ENCODE measurements at regions of chr14 and their contacts with region 1.

Region 1: DNA sequence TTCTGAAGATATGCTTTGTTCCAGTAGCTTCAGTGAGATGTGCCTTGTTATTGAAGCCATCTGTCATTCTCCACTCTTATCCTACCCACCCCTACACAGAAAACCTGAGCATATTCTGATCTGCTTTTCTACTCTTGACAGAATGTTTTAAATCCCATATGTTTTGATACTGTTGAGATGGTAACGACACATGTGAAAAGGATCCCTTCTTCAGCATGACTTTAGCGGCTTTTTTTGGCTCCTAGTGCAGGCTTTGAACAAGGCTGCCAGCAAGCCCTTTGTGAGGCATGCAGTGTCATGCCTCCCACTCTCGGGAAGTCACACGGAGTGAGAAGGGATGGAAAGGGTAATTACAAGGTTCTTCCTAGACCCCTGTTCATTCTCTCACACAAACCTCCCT is 228.8 kb upstream of the RGS6 start:
- DNase-seq: peak; percentile 76
- ATAC-seq: peak; percentile 19
- H3K4me3 ChIP-seq: no peak overlapping the region
- H3K27ac ChIP-seq: no peak overlapping the region
- H3K4me1 ChIP-seq: peaks cover 21% of the 10 kb centered on the region
- H3K27me3 ChIP-seq: no peaks in the 10 kb centered on the region
- CTCF ChIP-seq: no peak
- POLR2A ChIP-seq: no peak
- RAD21 ChIP-seq: no peak

Region 2: DNA sequence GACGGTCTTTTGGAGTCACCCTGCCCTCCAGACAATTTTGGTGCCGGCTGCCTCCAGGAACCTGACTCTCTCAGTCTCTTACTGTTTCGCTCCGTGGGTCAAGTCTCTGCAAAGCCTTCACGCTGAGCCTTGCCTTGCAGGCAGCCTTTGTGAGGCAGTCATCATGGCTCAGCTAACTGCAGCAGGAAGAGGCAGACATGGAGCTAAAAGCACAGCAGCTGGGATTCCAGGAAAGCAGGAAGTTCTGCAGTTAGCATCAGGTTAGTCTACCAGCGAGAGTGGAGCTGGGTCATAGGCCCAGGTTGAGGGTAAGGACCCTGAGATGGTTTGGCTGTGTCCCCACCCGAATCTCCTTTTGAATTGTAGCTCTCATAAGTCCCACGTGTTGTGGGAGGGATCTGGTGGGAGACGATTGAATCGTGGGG is 490.8 kb before region 1 on chr14:
- CTCF ChIA-PET with region 1: no interaction called
- POLR2A ChIA-PET with region 1: no interaction called
- dilution Hi-C with region 1: no loop called
- in situ Hi-C with region 1: no loop called
- intact Hi-C with region 1: no loop called
- DNase-seq: peak; percentile 10
- ATAC-seq: peak; percentile 32; the same call in 1 of the 2 replicates
- H3K4me3 ChIP-seq: no peak overlapping the region
- H3K27ac ChIP-seq: no peak overlapping the region
- H3K4me1 ChIP-seq: no peaks in the 10 kb centered on the region
- H3K27me3 ChIP-seq: no peaks in the 10 kb centered on the region
- CTCF ChIP-seq: no peak
- POLR2A ChIP-seq: no peak
- RAD21 ChIP-seq: no peak

Region 3: GRCh38 chr14:71647083-71647784 is 56.2 kb before region 1 on chr14:
- CTCF ChIA-PET with region 1: no interaction called
- POLR2A ChIA-PET with region 1: no interaction called
- dilution Hi-C with region 1: no loop called
- in situ Hi-C with region 1: no loop called
- intact Hi-C with region 1: no loop called
- DNase-seq: no peak
- ATAC-seq: no peak
- H3K4me3 ChIP-seq: no peak overlapping the region
- H3K27ac ChIP-seq: no peak overlapping the region
- H3K4me1 ChIP-seq: peaks cover 6% of the 10 kb centered on the region
- H3K27me3 ChIP-seq: no peaks in the 10 kb centered on the region
- CTCF ChIP-seq: no peak
- POLR2A ChIP-seq: no peak
- RAD21 ChIP-seq: no peak

Region 4: DNA sequence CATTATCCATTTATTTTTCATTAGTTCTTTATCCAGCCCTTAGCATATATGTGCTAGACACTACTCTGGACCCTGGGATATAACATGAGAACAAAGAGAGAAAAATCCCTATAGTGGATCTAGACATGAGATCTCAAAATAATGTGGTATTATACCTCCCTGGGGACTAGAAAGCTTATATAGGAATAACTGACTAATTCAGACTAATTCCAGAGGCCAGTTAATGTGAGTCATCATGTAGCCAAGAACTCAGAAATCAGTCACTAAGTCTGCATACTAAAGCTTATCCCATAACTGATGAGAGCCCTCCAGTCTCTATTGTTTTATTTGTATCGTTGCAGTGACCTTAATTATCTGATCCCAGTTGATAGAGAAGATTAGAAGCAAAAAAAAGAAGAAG is 38.3 kb before region 1 on chr14:
- CTCF ChIA-PET with region 1: no interaction called
- POLR2A ChIA-PET with region 1: no interaction called
- dilution Hi-C with region 1: no loop called
- in situ Hi-C with region 1: no loop called
- intact Hi-C with region 1: loop called (anchors 5 kb)
- DNase-seq: peak; percentile 89
- ATAC-seq: peak; percentile 92
- H3K4me3 ChIP-seq: no peak overlapping the region
- H3K27ac ChIP-seq: no peak overlapping the region
- H3K4me1 ChIP-seq: peaks cover 10% of the 10 kb centered on the region
- H3K27me3 ChIP-seq: no peaks in the 10 kb centered on the region
- CTCF ChIP-seq: no peak
- POLR2A ChIP-seq: no peak
- RAD21 ChIP-seq: no peak; the same call in 1 of the 2 replicates